ENCODE measurements at regions of chr19 and their contacts with region 1.

Region 1: GRCh38 chr19:36114763-36115452 is at the start of gene POLR2I:
- DNase-seq: peak; percentile 99
- total RNA-seq, gene POLR2I: 98.7 TPM

Region 2: DNA sequence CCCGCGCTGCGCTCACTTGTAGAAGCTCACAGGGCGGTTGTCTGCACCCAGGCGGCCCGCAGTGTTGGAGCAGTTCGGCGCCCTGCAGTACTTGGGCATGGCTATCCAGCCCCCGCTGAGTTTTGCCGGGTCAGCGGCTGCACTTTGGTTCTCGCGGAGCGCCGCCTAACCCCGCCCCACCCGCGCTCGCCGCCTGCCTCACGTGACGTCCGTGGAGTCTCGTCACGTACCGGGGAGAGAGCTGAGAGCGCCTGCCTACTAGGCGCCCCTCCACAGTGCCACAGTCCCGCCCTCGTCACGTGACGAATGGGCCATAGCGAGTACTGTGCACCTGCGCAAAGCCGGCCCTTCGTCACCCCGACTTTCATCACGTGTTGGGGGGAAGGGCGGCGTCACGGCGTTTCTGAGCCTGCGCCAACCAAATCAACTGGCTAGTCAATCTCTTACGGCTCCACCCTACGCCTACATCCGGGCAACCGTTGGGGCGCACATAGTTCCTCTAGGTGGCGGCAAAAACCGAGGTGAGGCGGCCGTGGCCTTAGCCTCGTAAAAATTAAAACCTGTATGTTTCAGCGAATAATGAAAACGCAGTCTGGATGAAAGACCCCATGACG is 60.7 kb before region 1 on chr19 and contains the start of gene THAP8:
- intact Hi-C with region 1: loop called (anchors 2 kb)
- DNase-seq: peak; percentile 100
- total RNA-seq, gene THAP8: 3.9 TPM